HCT116 (cell line): ENCODE measurements at regions of chr2 and their contacts with region 1.

Region 1: GRCh38 chr2:86105252-86105968 is at the start of gene POLR1A:
- DNase-seq: peak; percentile 87
- ATAC-seq: peak; percentile 85
- H3K4me3 ChIP-seq: peak within 1 kb of the TSS; percentile 89 to 95
- H3K27ac ChIP-seq: peak within 1 kb of the TSS; percentile 77
- H3K4me1 ChIP-seq: peaks cover 6 to 21% of the 10 kb centered on the region in 2 experiments
- H3K27me3 ChIP-seq: no peaks in the 10 kb centered on the region
- CTCF ChIP-seq: peak in 1 of 3 experiments; percentile 19; a peak in 1 of 6 replicates
- POLR2A ChIP-seq: no peak
- RAD21 ChIP-seq: no peak
- total RNA-seq, gene POLR1A: 46.6 TPM

Region 2: DNA sequence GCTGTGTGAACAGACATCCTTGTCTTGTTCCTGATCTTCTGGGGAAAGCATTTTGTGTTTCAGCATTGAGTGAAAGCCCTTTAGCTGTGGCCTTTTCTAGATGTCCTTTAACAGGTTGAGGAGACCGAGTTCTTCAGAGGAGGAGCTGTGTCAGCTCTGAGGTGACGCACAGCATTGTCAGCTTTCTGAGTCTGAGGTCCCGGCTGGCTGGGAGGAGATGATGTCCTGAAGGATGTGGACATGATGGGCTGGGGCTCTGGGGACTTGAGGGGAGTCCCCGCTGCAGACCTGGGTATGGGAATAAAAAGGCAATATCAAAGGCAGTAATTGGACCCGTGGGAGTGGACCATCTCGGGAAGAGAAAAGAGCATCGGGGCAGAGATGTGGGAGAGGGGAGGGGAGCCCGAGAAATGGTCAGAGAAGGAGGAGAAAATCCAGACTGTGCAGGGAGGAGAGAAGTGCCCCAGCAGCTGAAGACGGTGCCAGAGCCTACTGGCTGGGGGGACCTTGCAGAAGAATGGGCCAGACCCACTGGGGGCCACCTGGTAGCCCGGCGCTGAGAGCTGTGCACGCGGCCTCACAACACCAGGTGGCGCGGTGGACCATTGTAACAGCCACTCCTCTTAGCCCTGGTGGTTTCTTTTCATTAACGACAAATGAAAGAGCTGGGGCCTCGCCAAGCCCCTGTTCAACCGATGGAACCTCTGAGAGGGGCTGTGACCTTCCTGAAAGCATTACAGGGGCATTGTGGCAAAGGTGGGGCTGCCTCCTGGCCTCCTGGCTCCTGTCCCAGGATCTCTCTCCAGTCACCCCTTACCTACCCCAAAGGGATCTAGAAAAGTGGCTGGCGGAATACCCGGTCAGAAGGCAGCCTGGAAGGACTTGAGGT is 278.2 kb before region 1 on chr2:
- CTCF ChIA-PET with region 1: interaction called, 10 read pairs
- POLR2A ChIA-PET with region 1: no interaction called
- RAD21 ChIA-PET with region 1: no interaction called
- intact Hi-C with region 1: no loop called
- DNase-seq: peak; percentile 27
- ATAC-seq: peak; percentile 98
- H3K4me3 ChIP-seq: peak overlapping the region; percentile 21 to 24; a peak in 3 of 4 replicates
- H3K27ac ChIP-seq: no peak overlapping the region
- H3K4me1 ChIP-seq: peaks cover 3 to 5% of the 10 kb centered on the region in 2 experiments; a peak in 1 of 4 replicates
- H3K27me3 ChIP-seq: no peaks in the 10 kb centered on the region
- CTCF ChIP-seq: peak; percentile 84 to 88 (median 86)
- POLR2A ChIP-seq: no peak
- RAD21 ChIP-seq: peak; percentile 96

Region 3: GRCh38 chr2:85888684-85889626 is 216.5 kb before region 1 on chr2 and contains the start of gene ST3GAL5:
- CTCF ChIA-PET with region 1: no interaction called
- POLR2A ChIA-PET with region 1: no interaction called
- RAD21 ChIA-PET with region 1: no interaction called
- intact Hi-C with region 1: loop called (anchors 5 kb)
- DNase-seq: peak; percentile 67
- ATAC-seq: peak; percentile 85
- H3K4me3 ChIP-seq: peak within 1 kb of the TSS; percentile 66 to 85
- H3K27ac ChIP-seq: peak within 1 kb of the TSS; percentile 31; the same call in 1 of the 2 replicates
- H3K4me1 ChIP-seq: peaks cover 17 to 36% of the 10 kb centered on the region in 2 experiments
- H3K27me3 ChIP-seq: no peaks in the 10 kb centered on the region
- CTCF ChIP-seq: peak; percentile 45 to 83 (median 71); a peak in 5 of 6 replicates
- POLR2A ChIP-seq: no peak
- RAD21 ChIP-seq: peak; percentile 38; the same call in 1 of the 2 replicates
- total RNA-seq, gene ST3GAL5: 14.8 TPM

Region 4: GRCh38 chr2:85978883-85979780 is 126.3 kb before region 1 on chr2:
- CTCF ChIA-PET with region 1: no interaction called
- POLR2A ChIA-PET with region 1: no interaction called
- RAD21 ChIA-PET with region 1: no interaction called
- intact Hi-C with region 1: no loop called
- DNase-seq: no peak
- ATAC-seq: no peak
- H3K4me3 ChIP-seq: no peak overlapping the region
- H3K27ac ChIP-seq: no peak overlapping the region
- H3K4me1 ChIP-seq: peaks cover 0 to 3% of the 10 kb centered on the region in 2 experiments; a peak in 1 of 4 replicates
- H3K27me3 ChIP-seq: no peaks in the 10 kb centered on the region
- CTCF ChIP-seq: no peak
- POLR2A ChIP-seq: no peak
- RAD21 ChIP-seq: no peak

Region 5: GRCh38 chr2:86185517-86186212 is 80.3 kb after region 1 on chr2:
- CTCF ChIA-PET with region 1: no interaction called
- POLR2A ChIA-PET with region 1: no interaction called
- RAD21 ChIA-PET with region 1: no interaction called
- intact Hi-C with region 1: loop called (anchors 5 kb)
- DNase-seq: no peak
- ATAC-seq: no peak
- H3K4me3 ChIP-seq: no peak overlapping the region
- H3K27ac ChIP-seq: no peak overlapping the region
- H3K4me1 ChIP-seq: no peaks in the 10 kb centered on the region
- H3K27me3 ChIP-seq: no peaks in the 10 kb centered on the region
- CTCF ChIP-seq: no peak
- POLR2A ChIP-seq: no peak
- RAD21 ChIP-seq: no peak